CD14-positive monocyte (primary cell): ENCODE measurements at regions of chr20 and their contacts with region 1.

Region 1: DNA sequence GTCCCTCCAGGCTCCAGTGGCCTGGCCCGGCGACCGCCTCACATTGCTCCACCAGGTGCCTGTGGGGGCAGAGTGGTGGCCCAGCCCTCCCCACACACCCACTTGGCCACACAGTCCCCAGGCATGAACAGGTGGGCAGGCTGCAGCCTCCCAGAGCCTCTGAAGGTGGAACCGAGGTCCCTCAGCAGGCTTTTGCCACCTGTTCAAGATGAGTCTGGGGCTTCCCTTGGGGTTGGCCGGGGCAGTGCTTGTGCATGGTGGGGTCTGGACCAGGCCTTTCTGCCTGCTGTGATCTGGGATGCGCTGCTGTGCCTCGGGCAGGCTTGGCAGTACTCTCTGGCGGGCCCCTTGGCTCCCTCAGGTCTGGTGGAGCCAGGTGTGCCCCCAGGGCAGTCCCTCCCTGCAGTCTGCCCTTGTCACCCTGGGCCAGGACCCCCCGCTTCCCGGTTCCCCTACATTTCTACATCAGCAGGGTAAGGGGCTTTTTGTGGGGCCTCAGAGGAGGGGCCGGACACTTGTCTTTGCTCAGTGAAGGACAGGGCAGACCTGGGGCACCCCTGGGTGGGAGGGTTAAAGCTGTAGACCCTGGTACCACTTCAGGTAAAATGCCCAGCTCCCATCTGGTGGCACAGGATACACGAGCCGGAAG is 2.7 kb upstream of the COL9A3 start:
- DNase-seq: no peak
- H3K4me3 ChIP-seq: no peak overlapping the region
- H3K4me3 Mint-ChIP-seq: peak overlapping the region in 1 of 2 donors; percentile 75
- H3K27ac ChIP-seq: no peak overlapping the region
- H3K27ac Mint-ChIP-seq: no peak overlapping the region
- H3K4me1 ChIP-seq: peaks cover 14 to 36% of the 10 kb centered on the region in 2 donors
- H3K4me1 Mint-ChIP-seq: peaks cover 21% of the 10 kb centered on the region
- H3K27me3 ChIP-seq: peaks cover 19 to 49% of the 10 kb centered on the region in 2 donors
- H3K27me3 Mint-ChIP-seq: peaks cover 44 to 67% (median 46%) of the 10 kb centered on the region in 3 donors
- CTCF ChIP-seq: no peak

Region 2: DNA sequence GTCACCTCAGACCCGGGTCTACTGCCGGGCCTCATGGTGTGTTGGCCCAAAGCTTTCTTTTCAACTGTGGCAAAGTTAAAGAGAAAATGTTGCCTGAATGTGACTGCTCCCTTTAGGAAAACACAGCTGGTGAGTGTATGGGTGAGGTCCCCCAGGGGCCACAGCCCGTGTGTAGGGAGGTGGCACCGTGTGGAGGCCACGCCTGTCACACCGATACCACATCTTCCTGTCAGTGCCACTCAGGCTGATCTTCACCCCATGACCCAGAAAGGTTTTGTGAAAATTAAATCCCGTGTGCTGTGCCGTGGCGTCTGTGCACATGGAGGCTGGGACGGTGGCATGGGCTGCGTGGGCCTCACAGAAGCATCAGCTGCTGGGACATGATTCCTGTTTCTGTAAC is 522.1 kb before region 1 on chr20:
- intact Hi-C with region 1: no loop called
- DNase-seq: no peak
- H3K4me3 ChIP-seq: no peak overlapping the region
- H3K4me3 Mint-ChIP-seq: no peak overlapping the region
- H3K27ac ChIP-seq: no peak overlapping the region
- H3K27ac Mint-ChIP-seq: peak overlapping the region in 1 of 7 donors; percentile 62
- H3K4me1 ChIP-seq: no peaks in the 10 kb centered on the region
- H3K4me1 Mint-ChIP-seq: no peaks in the 10 kb centered on the region
- H3K27me3 ChIP-seq: no peaks in the 10 kb centered on the region
- H3K27me3 Mint-ChIP-seq: no peaks in the 10 kb centered on the region
- CTCF ChIP-seq: no peak

Region 3: GRCh38 chr20:62500237-62500864 is 313.8 kb before region 1 on chr20:
- intact Hi-C with region 1: loop called in 1 of 2 experiments (anchors 5 kb)
- DNase-seq: peak; percentile 65 to 83 (median 72)
- H3K4me3 ChIP-seq: no peak overlapping the region
- H3K4me3 Mint-ChIP-seq: peak overlapping the region in 1 of 2 donors; percentile 2
- H3K27ac ChIP-seq: no peak overlapping the region
- H3K27ac Mint-ChIP-seq: peak overlapping the region; percentile 12 to 85 (median 51)
- H3K4me1 ChIP-seq: peaks cover 3 to 14% of the 10 kb centered on the region in 2 donors
- H3K4me1 Mint-ChIP-seq: peaks cover 20% of the 10 kb centered on the region
- H3K27me3 ChIP-seq: peaks cover 0 to 3% of the 10 kb centered on the region in 2 donors
- H3K27me3 Mint-ChIP-seq: peaks cover 6 to 8% (median 6%) of the 10 kb centered on the region in 3 donors
- CTCF ChIP-seq: peak; percentile 80

Region 4: GRCh38 chr20:62782149-62782892 is 31.9 kb before region 1 on chr20:
- intact Hi-C with region 1: no loop called
- DNase-seq: no peak
- H3K4me3 ChIP-seq: no peak overlapping the region
- H3K4me3 Mint-ChIP-seq: no peak overlapping the region
- H3K27ac ChIP-seq: no peak overlapping the region
- H3K27ac Mint-ChIP-seq: peak overlapping the region in 1 of 7 donors; percentile 58
- H3K4me1 ChIP-seq: peaks cover 6 to 15% of the 10 kb centered on the region in 2 donors
- H3K4me1 Mint-ChIP-seq: peaks cover 16% of the 10 kb centered on the region
- H3K27me3 ChIP-seq: no peaks in the 10 kb centered on the region
- H3K27me3 Mint-ChIP-seq: peaks cover 0 to 8% (median 7%) of the 10 kb centered on the region in 3 donors
- CTCF ChIP-seq: no peak